ENCODE measurements at regions of chr13 and their contacts with region 1.

Region 1: DNA sequence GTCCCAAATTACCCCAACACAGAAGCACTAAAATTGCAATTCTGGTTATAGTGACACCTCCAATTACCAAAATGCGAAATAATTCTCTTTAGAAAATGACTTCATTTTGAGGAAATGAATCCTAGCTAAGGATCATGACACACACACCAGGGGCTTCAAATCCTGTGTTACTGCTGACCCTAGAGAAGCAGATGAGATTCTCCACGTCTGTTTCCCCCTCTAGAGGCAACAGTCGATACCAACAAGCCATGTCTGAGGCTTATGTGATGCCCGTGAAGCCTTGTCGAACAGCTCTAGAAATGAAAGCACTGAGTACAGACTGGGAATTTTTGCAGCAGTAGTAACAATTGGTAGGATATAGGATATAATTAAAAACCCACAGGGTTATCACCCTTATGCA is 153.6 kb upstream of the TMTC4 start:
- DNase-seq: peak in 1 of 2 experiments; percentile 3
- H3K4me3 ChIP-seq: no peak overlapping the region
- H3K27ac ChIP-seq: no peak overlapping the region
- H3K4me1 ChIP-seq: peaks cover 0 to 5% (median 0%) of the 10 kb centered on the region in 4 experiments; a peak in 1 of 7 replicates
- H3K27me3 ChIP-seq: no peaks in the 10 kb centered on the region
- CTCF ChIP-seq: peak; percentile 44 to 69 (median 69)
- EP300 ChIP-seq: no peak
- POLR2A ChIP-seq: no peak
- RAD21 ChIP-seq: peak; percentile 80 to 85

Region 2: DNA sequence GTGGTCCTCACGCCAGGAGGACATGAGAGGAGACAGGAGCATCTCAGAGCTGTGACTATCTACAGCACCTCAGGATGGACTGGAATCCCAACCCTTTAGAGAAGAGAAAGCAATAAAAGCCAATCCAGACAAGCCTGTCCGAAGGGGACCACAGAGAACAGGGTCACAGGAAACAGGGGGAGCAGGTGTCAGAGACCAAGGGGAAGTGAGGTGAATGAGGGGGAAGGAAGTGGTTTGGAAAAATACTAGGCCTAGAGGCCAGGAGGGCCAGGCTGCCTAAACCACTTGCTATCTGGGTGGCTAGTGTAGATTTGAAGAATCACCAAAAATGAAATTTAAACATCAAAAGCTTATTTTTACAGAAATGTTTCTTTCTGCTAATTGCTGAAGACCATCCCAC is 169.9 kb before region 1 on chr13:
- CTCF ChIA-PET with region 1: interaction called, 14 read pairs
- POLR2A ChIA-PET with region 1: no interaction called
- DNase-seq: no peak
- H3K4me3 ChIP-seq: no peak overlapping the region
- H3K27ac ChIP-seq: no peak overlapping the region
- H3K4me1 ChIP-seq: peaks cover 0 to 5% (median 2%) of the 10 kb centered on the region in 4 experiments; a peak in 4 of 7 replicates
- H3K27me3 ChIP-seq: no peaks in the 10 kb centered on the region
- CTCF ChIP-seq: no peak
- EP300 ChIP-seq: no peak
- POLR2A ChIP-seq: no peak
- RAD21 ChIP-seq: no peak

Region 3: GRCh38 chr13:100721885-100722512 is 106.2 kb before region 1 on chr13:
- CTCF ChIA-PET with region 1: interaction called, 51 read pairs
- POLR2A ChIA-PET with region 1: no interaction called
- DNase-seq: peak in 1 of 2 experiments; percentile 82
- H3K4me3 ChIP-seq: no peak overlapping the region
- H3K27ac ChIP-seq: no peak overlapping the region
- H3K4me1 ChIP-seq: no peaks in the 10 kb centered on the region
- H3K27me3 ChIP-seq: no peaks in the 10 kb centered on the region; a peak in 1 of 7 replicates
- CTCF ChIP-seq: peak; percentile 60 to 80 (median 63)
- EP300 ChIP-seq: no peak
- POLR2A ChIP-seq: no peak
- RAD21 ChIP-seq: peak; percentile 69 to 76

Region 4: DNA sequence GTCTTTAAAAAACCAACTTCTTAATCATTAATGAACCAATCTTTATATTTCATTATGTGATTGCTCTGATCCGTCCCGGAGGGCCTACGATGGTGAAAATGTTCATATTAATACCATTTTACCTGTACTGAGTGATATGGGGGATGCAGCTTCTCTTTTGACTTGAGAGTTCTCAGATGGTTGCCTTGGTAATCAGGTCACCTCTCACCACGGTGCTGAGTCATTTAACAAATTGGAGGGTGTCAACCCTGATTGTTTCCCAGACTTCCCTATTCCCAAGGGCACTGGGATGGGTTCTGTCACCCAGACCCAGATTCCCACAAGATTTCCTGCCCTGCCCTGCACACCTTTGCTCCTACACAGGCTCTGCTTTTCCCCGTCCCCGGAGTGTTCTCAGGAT is 25.1 kb before region 1 on chr13:
- CTCF ChIA-PET with region 1: interaction called, 24 read pairs
- POLR2A ChIA-PET with region 1: no interaction called
- DNase-seq: no peak
- H3K4me3 ChIP-seq: no peak overlapping the region
- H3K27ac ChIP-seq: no peak overlapping the region
- H3K4me1 ChIP-seq: peaks cover 0 to 2% (median 0%) of the 10 kb centered on the region in 4 experiments; a peak in 2 of 7 replicates
- H3K27me3 ChIP-seq: no peaks in the 10 kb centered on the region
- CTCF ChIP-seq: no peak
- EP300 ChIP-seq: no peak
- POLR2A ChIP-seq: no peak
- RAD21 ChIP-seq: no peak

Region 5: DNA sequence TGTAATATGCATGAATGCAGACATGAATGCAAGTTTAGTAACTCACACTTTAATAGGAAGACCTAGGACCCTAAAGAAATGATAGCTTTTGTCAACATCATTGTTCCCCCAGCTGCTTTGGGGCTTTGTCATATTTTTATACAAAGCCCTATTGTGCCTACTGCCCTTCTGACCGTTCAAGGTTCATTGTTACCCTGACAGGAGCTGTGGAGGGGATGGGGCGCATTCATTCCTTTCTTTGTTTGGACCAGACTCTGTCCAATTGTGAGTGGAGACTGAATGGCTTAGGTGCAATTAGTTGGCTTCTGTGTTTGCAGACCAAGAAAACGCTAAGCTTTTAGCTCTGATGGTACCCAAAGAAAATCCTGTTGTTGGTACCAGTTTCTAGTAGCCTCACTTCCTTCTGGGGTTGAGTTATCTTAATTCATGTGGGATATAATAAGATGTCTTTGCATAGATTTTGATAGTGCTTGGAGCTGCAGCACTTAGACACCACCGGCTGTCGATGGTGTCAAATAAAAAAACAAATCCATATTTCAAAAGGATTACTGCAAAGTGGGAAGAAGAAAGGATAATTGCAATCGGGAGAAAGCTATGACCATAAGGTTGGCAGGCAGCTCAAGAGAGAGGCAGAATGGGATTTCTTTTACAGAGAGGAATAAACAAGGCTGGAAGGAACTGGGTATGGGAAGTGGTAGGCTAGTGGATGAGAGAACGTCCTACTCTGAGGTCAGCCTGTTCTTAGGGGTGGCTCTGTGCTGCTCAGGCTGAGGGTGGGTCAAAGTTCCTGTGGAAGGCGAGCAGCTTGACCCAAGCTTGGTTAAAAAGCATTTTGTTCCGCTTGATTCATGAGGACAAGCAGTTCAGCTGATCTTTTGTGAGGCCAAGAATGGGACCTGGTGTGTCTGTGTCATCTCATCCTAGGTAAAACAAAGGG is 19.6 kb before region 1 on chr13:
- CTCF ChIA-PET with region 1: interaction called, 12 read pairs
- POLR2A ChIA-PET with region 1: no interaction called
- DNase-seq: no peak
- H3K4me3 ChIP-seq: no peak overlapping the region
- H3K27ac ChIP-seq: no peak overlapping the region
- H3K4me1 ChIP-seq: 0 out of 7 replicates have a peak, but pooled peaks cover 0 to 2% (median 0%) of the 10 kb centered on the region in 4 experiments
- H3K27me3 ChIP-seq: no peaks in the 10 kb centered on the region
- CTCF ChIP-seq: no peak
- EP300 ChIP-seq: no peak
- POLR2A ChIP-seq: no peak
- RAD21 ChIP-seq: no peak

Region 6: GRCh38 chr13:100815476-100816046 is 12.7 kb before region 1 on chr13:
- CTCF ChIA-PET with region 1: interaction called, 12 read pairs
- POLR2A ChIA-PET with region 1: no interaction called
- DNase-seq: peak in 1 of 2 experiments; percentile 3
- H3K4me3 ChIP-seq: no peak overlapping the region
- H3K27ac ChIP-seq: no peak overlapping the region
- H3K4me1 ChIP-seq: peaks cover 0 to 5% (median 5%) of the 10 kb centered on the region in 4 experiments; a peak in 3 of 7 replicates
- H3K27me3 ChIP-seq: no peaks in the 10 kb centered on the region
- CTCF ChIP-seq: no peak
- EP300 ChIP-seq: no peak
- POLR2A ChIP-seq: no peak
- RAD21 ChIP-seq: no peak

Region 7: DNA sequence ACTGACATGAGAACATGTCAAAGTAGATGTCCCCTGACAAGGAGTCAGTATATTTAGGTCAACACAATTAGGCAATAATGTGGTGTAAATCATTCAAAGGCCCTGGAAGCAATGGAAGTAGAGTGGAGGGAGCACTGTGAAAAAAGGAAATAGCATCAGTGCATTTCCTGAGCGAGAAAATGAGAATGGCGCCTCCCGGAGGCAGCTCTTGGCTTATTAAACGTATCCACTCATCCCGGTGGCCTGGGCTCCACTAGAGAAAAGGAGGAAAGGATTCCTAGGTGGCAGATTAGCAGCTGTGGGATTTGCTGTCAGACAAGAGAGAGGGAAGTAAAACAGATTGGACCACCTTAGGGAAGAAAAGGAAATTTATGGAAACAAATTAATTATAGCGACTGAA is 20.1 kb after region 1 on chr13:
- CTCF ChIA-PET with region 1: interaction called, 19 read pairs
- POLR2A ChIA-PET with region 1: no interaction called
- DNase-seq: peak in 1 of 2 experiments; percentile 58
- H3K4me3 ChIP-seq: no peak overlapping the region
- H3K27ac ChIP-seq: no peak overlapping the region
- H3K4me1 ChIP-seq: no peaks in the 10 kb centered on the region; a peak in 1 of 7 replicates
- H3K27me3 ChIP-seq: no peaks in the 10 kb centered on the region
- CTCF ChIP-seq: peak; percentile 34 to 61 (median 60)
- EP300 ChIP-seq: no peak
- POLR2A ChIP-seq: no peak
- RAD21 ChIP-seq: peak; percentile 59 to 68

Region 8: GRCh38 chr13:100892981-100893380 is 64.8 kb after region 1 on chr13:
- CTCF ChIA-PET with region 1: no interaction called
- POLR2A ChIA-PET with region 1: no interaction called
- DNase-seq: no peak
- H3K4me3 ChIP-seq: no peak overlapping the region
- H3K27ac ChIP-seq: no peak overlapping the region
- H3K4me1 ChIP-seq: no peaks in the 10 kb centered on the region; a peak in 1 of 7 replicates
- H3K27me3 ChIP-seq: no peaks in the 10 kb centered on the region
- CTCF ChIP-seq: no peak
- EP300 ChIP-seq: no peak
- POLR2A ChIP-seq: no peak
- RAD21 ChIP-seq: no peak